IMR-90 (cell line): ENCODE measurements at regions of chrX and their contacts with region 1.

Region 1: GRCh38 chrX:65985922-65986588 is 53.8 kb downstream of the VSIG4 start:
- DNase-seq: peak; percentile 47
- ATAC-seq: peak; percentile 85
- H3K4me3 ChIP-seq: no peak overlapping the region
- H3K27ac ChIP-seq: no peak overlapping the region
- H3K4me1 ChIP-seq: no peaks in the 10 kb centered on the region
- H3K27me3 ChIP-seq: peaks cover 2% of the 10 kb centered on the region; the same call in 1 of the 2 replicates
- CTCF ChIP-seq: peak; percentile 62
- POLR2A ChIP-seq: no peak
- RAD21 ChIP-seq: peak; percentile 76

Region 2: DNA sequence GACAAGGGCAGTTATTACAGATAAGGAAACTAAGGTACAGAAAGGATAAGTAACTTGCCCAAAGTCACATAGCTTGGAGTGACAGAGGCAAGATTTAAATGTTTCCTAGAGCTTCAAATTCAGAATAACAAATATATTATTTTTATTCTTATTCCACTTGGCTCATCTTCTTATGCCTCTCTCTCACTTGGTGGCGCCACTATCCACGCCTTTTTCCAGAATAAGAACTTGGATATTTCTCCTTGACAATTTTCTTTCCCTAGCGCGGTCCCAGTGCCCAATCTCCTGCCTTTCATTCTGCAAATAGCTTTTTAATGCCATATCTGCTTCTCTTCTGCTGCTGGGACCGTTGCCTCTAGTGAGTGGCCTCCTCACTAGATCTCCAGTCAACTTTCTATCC is 240.1 kb before region 1 on chrX:
- CTCF ChIA-PET with region 1: no interaction called
- POLR2A ChIA-PET with region 1: no interaction called
- dilution Hi-C with region 1: no loop called
- in situ Hi-C with region 1: no loop called
- intact Hi-C with region 1: loop called (anchors 1 kb)
- DNase-seq: no peak
- ATAC-seq: no peak
- H3K4me3 ChIP-seq: no peak overlapping the region
- H3K27ac ChIP-seq: no peak overlapping the region
- H3K4me1 ChIP-seq: no peaks in the 10 kb centered on the region
- H3K27me3 ChIP-seq: peaks cover 2% of the 10 kb centered on the region; the same call in 1 of the 2 replicates
- CTCF ChIP-seq: peak; percentile 12; the same call in 1 of the 2 replicates
- POLR2A ChIP-seq: no peak
- RAD21 ChIP-seq: 0 out of 2 replicates have a peak, but pooled peaks have one; percentile 8

Region 3: GRCh38 chrX:66150163-66150562 is 164.1 kb after region 1 on chrX:
- CTCF ChIA-PET with region 1: no interaction called
- POLR2A ChIA-PET with region 1: no interaction called
- dilution Hi-C with region 1: no loop called
- in situ Hi-C with region 1: no loop called
- intact Hi-C with region 1: no loop called
- DNase-seq: peak; percentile 7
- ATAC-seq: no peak
- H3K4me3 ChIP-seq: no peak overlapping the region
- H3K27ac ChIP-seq: no peak overlapping the region
- H3K4me1 ChIP-seq: no peaks in the 10 kb centered on the region
- H3K27me3 ChIP-seq: peaks cover 2% of the 10 kb centered on the region; the same call in 1 of the 2 replicates
- CTCF ChIP-seq: no peak
- POLR2A ChIP-seq: no peak
- RAD21 ChIP-seq: no peak